Esophagus muscularis mucosa (tissue), 4 donors: ENCODE measurements at regions of chr17 and their contacts with region 1.

Region 1: GRCh38 chr17:28949185-28950016 is 1.9 kb downstream of the PHF12 start:
- DNase-seq: no peak
- H3K4me3 ChIP-seq: peak overlapping the region; percentile 82 to 98 (median 92)
- H3K27ac ChIP-seq: peak overlapping the region; percentile 93 to 99 (median 96)
- H3K4me1 ChIP-seq: peaks cover 50 to 69% (median 60%) of the 10 kb centered on the region in 4 donors
- H3K27me3 ChIP-seq: no peaks in the 10 kb centered on the region
- CTCF ChIP-seq: no peak
- EP300 ChIP-seq: no peak
- POLR2A ChIP-seq: no peak

Region 2: DNA sequence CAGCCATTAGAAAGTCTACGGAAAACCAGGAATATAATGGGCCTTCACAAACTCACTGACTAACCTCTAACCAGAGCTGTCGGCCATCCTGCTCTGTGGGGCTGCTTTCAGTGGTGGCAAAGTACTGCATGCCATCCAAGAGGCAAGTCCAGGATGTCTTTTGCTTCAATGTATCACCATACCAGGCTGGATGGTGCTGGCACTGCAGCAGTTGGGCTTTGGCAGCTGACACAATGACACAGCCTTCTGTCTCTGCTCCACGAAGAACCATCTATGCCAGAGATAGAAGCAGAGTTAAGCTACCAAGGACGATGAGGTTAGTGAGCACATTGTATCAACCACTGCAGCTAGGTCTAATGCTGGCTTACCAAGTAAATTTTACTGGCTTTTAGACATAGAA is 325.7 kb before region 1 on chr17:
- intact Hi-C with region 1: no loop called
- DNase-seq: no peak
- H3K4me3 ChIP-seq: no peak overlapping the region
- H3K27ac ChIP-seq: no peak overlapping the region
- H3K4me1 ChIP-seq: no peaks in the 10 kb centered on the region
- H3K27me3 ChIP-seq: no peaks in the 10 kb centered on the region
- CTCF ChIP-seq: no peak
- EP300 ChIP-seq: no peak
- POLR2A ChIP-seq: no peak

Region 3: DNA sequence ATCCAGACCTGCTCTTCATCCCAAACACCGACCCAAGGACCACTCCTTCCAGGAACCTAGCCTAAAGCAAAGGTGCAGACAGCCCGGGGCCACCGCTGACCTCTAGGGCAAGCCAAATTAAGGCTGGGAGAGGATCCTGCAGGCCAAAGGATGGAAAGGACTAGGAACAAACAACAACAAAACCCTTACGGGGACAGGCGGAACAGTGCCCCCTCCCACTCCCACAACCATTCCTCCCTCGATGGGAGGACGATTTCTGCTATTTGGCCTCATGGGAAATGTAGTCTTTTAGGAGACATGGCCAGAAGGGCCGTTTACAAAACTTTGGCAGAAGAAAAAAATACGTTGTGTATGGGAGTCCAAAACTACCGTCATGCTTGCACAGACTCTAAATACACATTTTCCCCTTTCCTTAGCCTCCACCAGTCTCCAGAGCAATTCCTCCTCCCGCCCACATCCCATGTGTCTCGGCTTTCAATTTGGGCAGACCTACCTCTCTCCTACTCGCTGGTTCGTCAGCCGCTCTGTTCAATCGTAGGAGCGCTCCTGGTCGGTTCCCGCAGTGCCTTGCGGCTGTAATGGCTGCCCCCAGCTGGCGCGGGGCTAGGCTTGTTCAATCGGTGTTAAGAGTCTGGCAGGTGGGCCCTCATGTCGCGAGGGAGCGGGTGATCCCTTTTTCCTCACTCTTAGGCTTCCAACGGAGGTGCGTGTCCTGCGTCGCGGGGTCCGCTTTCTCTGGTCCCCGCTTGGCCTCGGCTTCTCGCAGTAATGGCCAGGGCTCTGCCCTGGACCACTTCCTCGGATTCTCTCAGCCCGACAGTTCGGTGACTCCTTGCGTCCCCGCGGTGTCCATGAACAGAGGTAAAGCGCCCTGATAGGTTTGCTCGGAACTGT is 94.7 kb before region 1 on chr17 and contains the start of gene ERAL1:
- intact Hi-C with region 1: no loop called
- DNase-seq: peak; percentile 95
- H3K4me3 ChIP-seq: peak within 1 kb of the TSS; percentile 65 to 80 (median 67)
- H3K27ac ChIP-seq: peak within 1 kb of the TSS; percentile 70 to 82 (median 76)
- H3K4me1 ChIP-seq: peaks cover 11 to 18% (median 16%) of the 10 kb centered on the region in 4 donors
- H3K27me3 ChIP-seq: no peaks in the 10 kb centered on the region
- CTCF ChIP-seq: peak in 1 of 3 experiments; percentile 30
- EP300 ChIP-seq: no peak
- POLR2A ChIP-seq: peak; percentile 30
- total RNA-seq, gene ERAL1: 24.5 to 38.0 (median 27.7) TPM

Region 4: DNA sequence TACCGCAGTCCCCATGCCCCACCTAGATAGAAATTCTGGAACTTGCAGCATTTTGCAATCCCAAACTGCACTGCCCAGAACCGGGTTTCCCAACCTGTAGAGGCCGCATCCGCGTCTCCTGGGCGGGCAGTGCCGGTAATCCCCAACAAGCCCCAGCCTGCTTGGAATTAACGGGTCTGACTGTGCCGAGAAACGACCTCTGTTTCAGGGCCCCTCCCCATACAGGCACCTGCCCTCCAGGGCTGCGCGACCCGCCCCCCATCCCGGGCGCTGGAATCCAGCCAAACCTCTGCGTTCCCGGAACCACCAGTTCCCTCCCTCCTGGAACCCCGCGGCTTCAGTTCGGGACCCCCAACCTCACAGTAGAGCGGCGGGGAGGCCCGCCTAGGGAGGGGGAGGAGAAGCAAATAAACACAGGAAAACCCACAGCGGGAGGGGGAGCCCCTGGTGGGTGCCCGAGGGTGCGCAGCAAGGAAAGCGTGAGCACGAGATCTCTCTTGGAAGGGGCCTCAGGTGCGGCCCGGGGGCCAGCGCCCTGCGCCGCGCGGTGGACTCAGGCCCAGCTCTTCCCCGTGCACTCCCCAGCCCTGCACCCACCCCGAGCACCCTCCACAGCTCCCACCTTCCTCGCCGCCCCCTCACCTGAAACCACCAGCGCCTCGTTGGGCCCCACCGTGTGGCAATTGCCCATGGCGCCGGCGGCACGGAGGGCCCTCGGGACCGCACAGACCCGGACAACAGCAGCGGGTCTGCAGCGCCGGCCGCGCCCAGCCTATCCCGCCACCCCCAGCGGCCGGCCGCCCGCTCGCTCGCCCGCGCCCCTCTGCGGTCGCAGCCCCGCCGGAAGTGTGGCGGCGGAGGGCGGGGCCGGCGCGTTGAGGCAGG is 52.3 kb before region 1 on chr17 and contains the start of gene FLOT2:
- intact Hi-C with region 1: loop called (anchors 10 kb)
- DNase-seq: peak; percentile 93
- H3K4me3 ChIP-seq: peak within 1 kb of the TSS; percentile 78 to 94 (median 90)
- H3K27ac ChIP-seq: peak within 1 kb of the TSS; percentile 85 to 97 (median 94)
- H3K4me1 ChIP-seq: peaks cover 45 to 69% (median 57%) of the 10 kb centered on the region in 4 donors
- H3K27me3 ChIP-seq: no peaks in the 10 kb centered on the region
- CTCF ChIP-seq: peak; percentile 14 to 24 (median 18)
- EP300 ChIP-seq: peak; percentile 84
- POLR2A ChIP-seq: peak; percentile 9
- total RNA-seq, gene FLOT2: 60.2 to 94.8 (median 86.0) TPM

Region 5: DNA sequence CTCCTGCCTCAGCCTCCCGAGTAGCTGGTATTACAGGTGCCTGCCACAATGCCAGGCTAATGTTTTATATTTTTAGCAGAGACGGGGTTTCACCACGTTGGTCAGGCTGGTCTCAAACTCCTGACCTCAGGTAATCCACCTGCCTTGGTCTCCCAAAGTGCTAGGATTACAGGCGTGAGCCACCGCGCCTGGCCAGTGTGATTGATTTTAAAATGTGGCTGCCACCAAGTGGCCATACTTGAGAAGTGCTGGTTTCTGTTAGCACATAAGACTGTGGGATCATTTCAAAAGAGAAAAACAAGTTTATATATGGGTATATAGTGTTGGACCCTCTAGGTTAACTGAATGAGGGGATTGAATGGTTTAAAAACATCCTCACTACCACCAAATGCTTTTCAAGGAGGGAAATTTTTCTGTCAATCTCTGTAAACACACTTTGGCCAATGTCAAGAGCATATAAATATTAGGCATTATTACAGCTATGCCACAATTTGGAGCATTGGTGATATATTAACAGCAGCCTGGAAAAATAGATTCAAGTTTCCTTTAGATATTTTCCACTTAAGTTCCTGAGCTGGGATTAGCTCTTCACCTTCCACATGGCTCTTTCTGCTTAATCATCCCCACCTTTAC is 33.0 kb before region 1 on chr17:
- intact Hi-C with region 1: loop called (anchors 5 kb)
- DNase-seq: no peak
- H3K4me3 ChIP-seq: no peak overlapping the region
- H3K27ac ChIP-seq: peak overlapping the region in 1 of 4 donors; percentile 14
- H3K4me1 ChIP-seq: peaks cover 0 to 13% (median 2%) of the 10 kb centered on the region in 4 donors
- H3K27me3 ChIP-seq: peaks cover 0 to 3% (median 0%) of the 10 kb centered on the region in 4 donors
- CTCF ChIP-seq: peak; percentile 62 to 71 (median 64)
- EP300 ChIP-seq: no peak
- POLR2A ChIP-seq: no peak

Region 6: DNA sequence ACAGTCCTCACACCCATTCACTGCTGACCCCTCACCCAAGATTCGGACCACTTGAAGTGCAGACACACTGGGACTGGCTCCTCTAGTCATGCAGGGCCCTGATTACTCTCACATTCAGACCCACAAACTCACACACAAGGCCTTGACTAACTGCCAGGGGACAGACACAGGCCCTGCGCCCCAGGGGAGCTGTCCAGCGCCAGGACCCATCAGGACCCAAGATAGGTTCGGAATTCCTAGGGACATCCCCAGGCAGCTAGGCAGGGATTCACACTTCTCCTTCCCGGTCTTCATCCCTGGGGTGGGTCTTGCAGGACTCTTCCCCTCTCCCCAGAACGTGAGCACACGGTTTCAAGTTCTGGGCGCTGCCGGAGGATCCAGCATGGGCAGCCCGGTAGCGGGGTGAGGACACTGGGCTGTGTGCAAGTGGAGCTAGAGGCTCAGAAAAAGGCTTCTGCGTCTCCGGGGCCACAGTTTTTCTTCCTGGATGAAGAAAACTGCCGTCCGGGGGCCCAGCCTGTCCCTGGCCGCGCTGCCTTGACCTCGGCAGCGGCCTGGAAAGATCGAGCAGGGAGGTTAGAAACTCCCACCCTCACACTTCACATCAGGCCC is 54.8 kb after region 1 on chr17:
- intact Hi-C with region 1: no loop called
- DNase-seq: no peak
- H3K4me3 ChIP-seq: no peak overlapping the region
- H3K27ac ChIP-seq: no peak overlapping the region
- H3K4me1 ChIP-seq: peaks cover 7 to 16% (median 14%) of the 10 kb centered on the region in 4 donors
- H3K27me3 ChIP-seq: peaks cover 0 to 71% (median 17%) of the 10 kb centered on the region in 4 donors
- CTCF ChIP-seq: no peak
- EP300 ChIP-seq: no peak
- POLR2A ChIP-seq: no peak

Region 7: DNA sequence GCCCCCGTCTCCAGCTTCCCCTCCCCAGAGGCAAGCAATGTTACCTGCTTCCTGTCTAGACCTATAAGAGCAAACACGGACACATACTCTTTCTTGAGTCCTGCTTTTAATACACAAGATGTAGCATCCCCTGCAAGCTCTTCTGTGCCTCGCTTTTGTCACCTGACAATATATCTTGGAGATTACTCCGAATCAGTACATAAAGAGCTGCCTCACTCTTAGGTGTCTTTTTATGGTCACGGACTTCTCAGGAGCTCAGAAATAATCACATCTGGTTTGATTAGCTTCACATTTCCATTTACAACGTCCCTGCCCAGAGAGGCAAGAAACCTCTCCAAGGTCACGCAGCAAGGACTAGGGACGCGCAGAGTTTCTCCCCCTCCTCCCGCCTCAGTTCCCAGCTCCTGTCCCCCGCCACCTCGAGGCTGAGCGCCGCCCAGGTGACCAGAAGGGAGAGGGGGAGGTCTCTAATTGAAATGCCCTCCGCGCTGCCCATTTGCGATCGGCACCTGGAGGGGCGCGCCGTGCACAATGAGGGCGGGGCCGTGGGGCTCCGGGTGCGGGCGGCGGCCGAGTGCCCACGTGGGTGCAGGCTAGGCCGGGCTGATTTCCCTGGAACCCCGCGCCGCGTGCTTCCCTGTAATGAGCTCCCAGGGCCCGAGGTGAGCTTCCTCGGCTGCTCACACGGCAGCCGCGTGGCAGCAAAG is 70.2 kb after region 1 on chr17:
- intact Hi-C with region 1: no loop called
- DNase-seq: no peak
- H3K4me3 ChIP-seq: peak overlapping the region in 1 of 4 donors; percentile 17
- H3K27ac ChIP-seq: no peak overlapping the region
- H3K4me1 ChIP-seq: peaks cover 9 to 11% (median 9%) of the 10 kb centered on the region in 4 donors
- H3K27me3 ChIP-seq: peaks cover 0 to 49% (median 13%) of the 10 kb centered on the region in 4 donors
- CTCF ChIP-seq: no peak
- EP300 ChIP-seq: no peak
- POLR2A ChIP-seq: no peak